B cell (primary cell): ENCODE measurements at regions of chr19 and their contacts with region 1.

Region 1: GRCh38 chr19:57389730-57390598 is at the start of gene ZNF548:
- DNase-seq: peak; percentile 99
- ATAC-seq: peak; percentile 99
- H3K4me3 ChIP-seq: peak within 1 kb of the TSS; percentile 65 to 93 (median 89)
- H3K4me3 Mint-ChIP-seq: peak within 1 kb of the TSS; percentile 99
- H3K27ac ChIP-seq: peak within 1 kb of the TSS; percentile 93
- H3K27ac Mint-ChIP-seq: peak within 1 kb of the TSS; percentile 98
- H3K4me1 ChIP-seq: peaks cover 17 to 19% of the 10 kb centered on the region in 2 donors
- H3K4me1 Mint-ChIP-seq: peaks cover 31% of the 10 kb centered on the region
- H3K27me3 ChIP-seq: no peaks in the 10 kb centered on the region
- H3K27me3 Mint-ChIP-seq: no peaks in the 10 kb centered on the region
- CTCF ChIP-seq: peak; percentile 42
- total RNA-seq, gene ZNF548: 83.8 and 85.8 TPM in 2 replicates

Region 2: GRCh38 chr19:57240311-57241090 is 149.5 kb before region 1 on chr19 and contains the start of gene ZNF805:
- CTCF ChIA-PET with region 1: no interaction called
- POLR2A ChIA-PET with region 1: interaction called, 5 read pairs
- intact Hi-C with region 1: loop called (anchors 1 kb)
- DNase-seq: peak; percentile 97
- ATAC-seq: peak; percentile 93
- H3K4me3 ChIP-seq: peak within 1 kb of the TSS; percentile 64 to 99 (median 94)
- H3K4me3 Mint-ChIP-seq: peak within 1 kb of the TSS; percentile 95
- H3K27ac ChIP-seq: peak within 1 kb of the TSS; percentile 77 to 86
- H3K27ac Mint-ChIP-seq: peak within 1 kb of the TSS; percentile 94
- H3K4me1 ChIP-seq: peaks cover 19 to 20% of the 10 kb centered on the region in 2 donors
- H3K4me1 Mint-ChIP-seq: peaks cover 33% of the 10 kb centered on the region
- H3K27me3 ChIP-seq: no peaks in the 10 kb centered on the region
- H3K27me3 Mint-ChIP-seq: no peaks in the 10 kb centered on the region
- CTCF ChIP-seq: no peak
- total RNA-seq, gene ZNF805: 18.9 and 20.0 TPM in 2 replicates

Region 3: DNA sequence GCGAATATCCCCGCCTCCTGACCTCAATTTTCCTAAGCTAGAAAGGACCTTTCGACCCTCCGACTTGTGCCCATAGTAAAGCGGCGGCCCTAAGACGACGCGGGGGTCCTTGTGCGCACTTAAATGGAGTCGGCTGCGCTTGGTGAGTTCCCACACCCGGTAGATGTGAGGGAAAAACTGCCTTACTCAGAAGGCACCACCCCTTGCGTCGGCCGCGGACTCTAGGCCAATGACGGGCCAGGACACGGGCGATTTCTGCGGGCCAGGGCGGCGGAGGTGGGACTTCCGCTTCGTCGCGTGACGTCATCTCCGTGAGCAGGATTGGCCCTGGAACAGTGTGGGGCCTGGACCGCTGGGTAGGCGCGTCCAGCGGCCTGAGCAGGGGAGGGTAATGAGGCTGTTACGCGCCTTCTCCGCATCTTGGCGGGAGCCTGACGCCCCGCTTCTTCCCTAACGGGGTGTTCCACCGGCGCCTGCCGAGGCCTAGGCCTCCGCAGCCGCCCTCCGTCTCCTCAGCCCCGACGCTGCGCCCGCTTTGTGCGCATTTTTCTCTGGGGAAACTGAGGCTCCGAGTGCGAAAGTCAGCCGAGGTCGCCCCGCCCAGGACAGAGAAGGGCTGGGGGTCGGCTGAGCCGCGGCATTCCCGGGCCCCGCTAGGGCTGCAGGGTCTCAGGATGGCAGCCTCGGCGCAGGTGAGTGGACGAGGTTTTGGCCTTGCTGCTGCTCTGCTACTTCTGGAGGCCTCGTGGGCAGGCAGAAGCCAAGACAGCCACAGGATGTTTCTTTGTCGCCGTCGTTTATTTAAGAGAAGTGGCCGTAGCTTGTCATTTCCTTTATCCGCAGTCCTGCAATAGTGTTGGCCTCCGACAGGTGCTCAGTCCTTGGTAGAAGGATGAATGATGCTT is 69.5 kb before region 1 on chr19 and contains the start of gene ZNF543:
- CTCF ChIA-PET with region 1: no interaction called
- POLR2A ChIA-PET with region 1: no interaction called
- intact Hi-C with region 1: loop called (anchors 1 kb)
- DNase-seq: peak; percentile 96
- ATAC-seq: peak; percentile 98
- H3K4me3 ChIP-seq: peak within 1 kb of the TSS; percentile 50 to 95 (median 89)
- H3K4me3 Mint-ChIP-seq: peak within 1 kb of the TSS; percentile 93
- H3K27ac ChIP-seq: peak within 1 kb of the TSS; percentile 85 to 89
- H3K27ac Mint-ChIP-seq: peak within 1 kb of the TSS; percentile 96
- H3K4me1 ChIP-seq: peaks cover 19 to 23% of the 10 kb centered on the region in 2 donors
- H3K4me1 Mint-ChIP-seq: peaks cover 32% of the 10 kb centered on the region
- H3K27me3 ChIP-seq: peaks cover 0 to 21% (median 13%) of the 10 kb centered on the region in 4 experiments
- H3K27me3 Mint-ChIP-seq: peaks cover 24% of the 10 kb centered on the region
- CTCF ChIP-seq: no peak
- total RNA-seq, gene ZNF543: 16.7 and 19.6 TPM in 2 replicates

Region 4: DNA sequence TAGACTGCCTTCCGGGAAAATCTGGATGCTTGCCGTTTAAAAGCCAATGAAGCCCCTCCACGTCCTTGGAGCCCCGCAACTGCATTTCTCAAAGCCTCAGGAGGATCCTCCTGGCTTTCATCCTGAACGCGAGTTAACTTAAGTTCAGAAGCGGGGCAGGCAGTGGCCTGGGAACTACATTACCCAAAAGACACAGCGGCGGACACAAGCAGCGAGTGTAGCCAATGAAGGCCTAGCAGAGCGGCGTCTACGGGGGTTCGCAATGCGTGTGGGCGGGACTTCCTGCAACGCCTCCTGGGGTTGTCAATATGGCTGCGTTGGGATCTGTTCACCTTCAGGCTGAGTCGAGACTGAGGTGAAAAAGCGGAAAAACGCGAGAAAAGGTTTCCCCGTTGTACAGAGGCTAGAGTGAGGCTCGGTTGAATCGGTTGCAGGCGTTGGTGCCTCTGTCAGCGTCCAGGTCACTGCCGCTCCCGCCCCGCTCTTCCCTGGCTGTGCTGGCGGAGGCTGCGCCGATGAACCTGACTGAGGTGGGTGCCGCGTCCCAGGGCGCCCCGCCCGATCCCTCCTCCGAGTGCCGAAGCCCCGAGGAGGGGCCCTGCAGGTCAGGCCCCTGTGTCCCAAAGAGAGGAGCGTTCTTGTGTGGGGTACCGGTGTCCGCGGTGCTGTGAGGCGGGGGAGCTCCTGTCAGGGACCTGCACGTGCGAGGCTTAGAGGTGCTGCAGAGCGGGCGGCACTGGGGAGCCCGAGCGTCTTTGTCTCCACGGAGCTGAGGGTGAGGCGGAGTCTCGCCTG is 21.1 kb after region 1 on chr19 and contains the start of gene ZNF17:
- CTCF ChIA-PET with region 1: no interaction called
- POLR2A ChIA-PET with region 1: interaction called, 5 read pairs
- intact Hi-C with region 1: loop called (anchors 1 kb)
- DNase-seq: peak; percentile 93
- ATAC-seq: peak; percentile 100
- H3K4me3 ChIP-seq: peak within 1 kb of the TSS; percentile 66 to 98 (median 89)
- H3K4me3 Mint-ChIP-seq: peak within 1 kb of the TSS; percentile 97
- H3K27ac ChIP-seq: peak within 1 kb of the TSS; percentile 22 to 77
- H3K27ac Mint-ChIP-seq: peak within 1 kb of the TSS; percentile 89
- H3K4me1 ChIP-seq: peaks cover 12 to 17% of the 10 kb centered on the region in 2 donors
- H3K4me1 Mint-ChIP-seq: peaks cover 26% of the 10 kb centered on the region
- H3K27me3 ChIP-seq: no peaks in the 10 kb centered on the region
- H3K27me3 Mint-ChIP-seq: no peaks in the 10 kb centered on the region
- CTCF ChIP-seq: no peak
- total RNA-seq, gene ZNF17: 25.8 and 30.7 TPM in 2 replicates

Region 5: DNA sequence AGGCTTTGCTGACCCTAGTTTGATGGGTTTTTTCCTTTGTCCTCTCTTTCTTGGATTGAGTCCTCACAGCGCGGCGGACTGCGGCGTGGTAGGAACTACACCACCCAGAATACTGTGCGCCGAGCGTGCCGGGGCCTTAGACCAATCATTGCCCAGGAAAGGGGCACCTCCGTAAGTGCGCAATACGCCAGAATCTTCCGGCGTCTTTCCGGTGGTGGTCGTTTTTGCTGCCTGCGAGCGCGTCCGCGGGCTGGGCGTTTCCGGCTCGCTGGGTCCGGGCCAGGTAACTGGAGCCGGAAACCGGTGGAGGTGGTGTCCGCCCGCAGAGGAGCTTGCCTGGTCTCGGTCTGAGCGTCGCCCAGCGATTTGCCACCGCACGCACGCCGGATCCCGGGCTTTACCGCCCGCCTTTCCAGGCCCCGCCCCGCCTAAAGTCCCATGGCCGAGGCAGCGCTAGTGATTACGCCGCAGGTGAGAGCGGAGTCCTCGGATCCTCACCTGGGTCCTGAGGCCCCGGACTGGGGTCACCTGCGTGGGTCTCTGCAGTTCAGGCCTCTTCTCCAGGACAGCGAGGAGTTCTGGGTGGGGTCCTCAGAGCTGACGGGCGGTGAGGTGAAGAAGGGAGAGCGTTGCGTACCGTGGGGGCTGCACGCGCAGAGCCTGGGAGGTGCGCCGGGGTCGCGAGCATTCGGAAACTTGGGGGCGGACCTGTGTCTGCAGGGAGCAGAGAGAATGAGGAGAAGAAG is 137.3 kb after region 1 on chr19 and contains the start of gene ZNF549:
- CTCF ChIA-PET with region 1: no interaction called
- POLR2A ChIA-PET with region 1: no interaction called
- intact Hi-C with region 1: loop called (anchors 1 kb)
- DNase-seq: peak; percentile 93
- ATAC-seq: peak; percentile 99
- H3K4me3 ChIP-seq: peak within 1 kb of the TSS; percentile 68 to 93 (median 92)
- H3K4me3 Mint-ChIP-seq: peak within 1 kb of the TSS; percentile 91
- H3K27ac ChIP-seq: peak within 1 kb of the TSS; percentile 84 to 89
- H3K27ac Mint-ChIP-seq: peak within 1 kb of the TSS; percentile 91
- H3K4me1 ChIP-seq: peaks cover 10 to 17% of the 10 kb centered on the region in 2 donors
- H3K4me1 Mint-ChIP-seq: peaks cover 22% of the 10 kb centered on the region
- H3K27me3 ChIP-seq: no peaks in the 10 kb centered on the region
- H3K27me3 Mint-ChIP-seq: no peaks in the 10 kb centered on the region
- CTCF ChIP-seq: no peak
- total RNA-seq, gene ZNF549: 23.0 and 23.7 TPM in 2 replicates

Region 6: DNA sequence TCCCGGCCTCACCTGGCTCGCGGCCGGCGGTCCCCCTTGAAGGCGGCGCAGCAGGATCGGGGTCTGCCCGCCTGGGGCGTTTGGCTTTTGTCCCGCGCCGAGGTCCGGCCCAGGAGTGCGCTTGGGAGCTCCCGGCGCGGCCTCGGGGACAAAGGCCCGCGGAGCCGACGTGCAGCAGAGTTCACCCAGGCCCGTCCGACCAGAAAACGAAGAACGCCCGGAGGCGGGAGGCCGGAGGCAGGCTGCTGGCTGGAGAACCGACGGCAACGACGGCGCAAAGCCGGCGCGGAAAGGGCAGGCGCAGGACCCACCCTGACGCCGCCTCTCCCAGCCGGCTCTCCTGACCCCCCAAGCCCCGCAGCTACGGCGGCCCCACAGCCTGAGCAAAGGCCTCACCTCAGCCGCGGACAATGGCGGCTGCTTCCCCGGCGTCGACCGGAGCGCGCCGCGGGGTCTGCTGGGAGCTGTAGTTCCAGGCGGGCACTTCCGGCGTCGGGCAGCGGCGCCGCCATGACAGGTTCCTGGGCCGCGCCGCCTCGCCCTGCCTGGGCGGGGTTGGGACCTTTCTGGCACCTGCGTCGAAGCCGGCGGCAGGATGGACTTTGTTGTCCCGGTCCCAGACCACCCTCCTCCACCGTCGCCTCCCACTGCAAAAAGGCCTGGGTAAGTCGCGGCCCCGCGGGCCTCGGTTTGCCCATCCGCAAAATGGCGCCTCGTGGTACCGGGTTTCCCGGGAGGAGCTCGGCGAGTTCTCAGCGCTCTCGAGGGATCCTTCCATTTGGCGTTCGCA is 612.6 kb after region 1 on chr19 and contains the start of gene ZNF606:
- CTCF ChIA-PET with region 1: no interaction called
- POLR2A ChIA-PET with region 1: no interaction called
- intact Hi-C with region 1: loop called (anchors 10 kb)
- DNase-seq: peak; percentile 93
- ATAC-seq: peak; percentile 96
- H3K4me3 ChIP-seq: peak within 1 kb of the TSS; percentile 77 to 98 (median 94)
- H3K4me3 Mint-ChIP-seq: peak within 1 kb of the TSS; percentile 91
- H3K27ac ChIP-seq: peak within 1 kb of the TSS; percentile 81 to 91
- H3K27ac Mint-ChIP-seq: peak within 1 kb of the TSS; percentile 88
- H3K4me1 ChIP-seq: peaks cover 22 to 27% of the 10 kb centered on the region in 2 donors
- H3K4me1 Mint-ChIP-seq: peaks cover 35% of the 10 kb centered on the region
- H3K27me3 ChIP-seq: no peaks in the 10 kb centered on the region
- H3K27me3 Mint-ChIP-seq: no peaks in the 10 kb centered on the region
- CTCF ChIP-seq: no peak
- total RNA-seq, gene ZNF606: 48.1 and 48.4 TPM in 2 replicates